Adrenal gland (tissue), 19 donors: ENCODE measurements at regions of chr17 and their contacts with region 1.

Region 1: DNA sequence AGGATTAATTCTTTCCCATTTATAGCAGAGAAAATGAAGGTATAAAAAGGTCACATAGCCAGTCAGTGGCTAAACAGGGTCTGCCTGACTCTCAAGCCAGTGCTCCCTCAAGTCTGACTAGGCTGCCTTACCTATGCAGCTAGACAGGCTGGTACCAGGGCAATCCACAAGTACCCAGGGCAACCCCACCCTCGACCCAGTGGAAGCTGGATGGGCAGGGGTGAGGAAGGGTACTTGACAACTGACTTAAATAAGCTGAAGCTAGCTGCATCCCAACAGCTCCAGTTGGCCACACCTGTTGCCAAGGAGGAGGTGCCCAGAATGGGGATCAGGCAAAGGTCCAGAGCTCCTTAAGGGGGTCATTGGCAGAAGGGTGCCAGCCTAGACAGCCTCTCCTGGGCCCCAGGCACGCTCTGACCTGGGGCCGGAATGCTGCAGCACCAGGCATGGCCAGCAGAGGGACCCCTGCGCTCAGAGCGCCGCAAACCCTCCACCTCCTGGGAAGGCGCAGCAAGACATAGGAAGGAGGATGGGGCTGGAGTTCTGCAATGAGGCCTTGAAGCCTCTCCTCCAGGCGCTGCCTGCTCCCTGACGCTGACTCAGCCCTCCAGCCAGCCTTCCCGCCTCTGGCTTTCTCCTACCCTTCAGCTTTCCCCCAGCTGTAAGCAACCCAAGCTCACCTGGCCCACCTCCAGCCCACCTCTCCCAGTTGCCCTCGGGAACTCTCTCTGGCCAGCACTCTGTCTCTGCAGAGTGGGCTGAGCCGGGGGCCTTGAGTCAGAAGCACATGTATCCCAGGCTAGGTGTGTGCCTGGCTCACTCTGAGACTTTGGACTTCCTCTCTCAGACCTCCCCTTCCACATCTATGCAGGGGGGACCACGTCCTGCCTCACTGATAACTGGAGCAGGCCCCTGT is 28.8 kb downstream of the MPP2 start:
- DNase-seq: peak; percentile 75 to 86 (median 85)
- H3K4me3 ChIP-seq: no peak overlapping the region
- H3K27ac ChIP-seq: no peak overlapping the region
- H3K4me1 ChIP-seq: peaks cover 3 to 6% of the 10 kb centered on the region in 2 donors
- H3K27me3 ChIP-seq: no peaks in the 10 kb centered on the region
- CTCF ChIP-seq: peak; percentile 86 to 96 (median 92)
- POLR2A ChIP-seq: no peak

Region 2: DNA sequence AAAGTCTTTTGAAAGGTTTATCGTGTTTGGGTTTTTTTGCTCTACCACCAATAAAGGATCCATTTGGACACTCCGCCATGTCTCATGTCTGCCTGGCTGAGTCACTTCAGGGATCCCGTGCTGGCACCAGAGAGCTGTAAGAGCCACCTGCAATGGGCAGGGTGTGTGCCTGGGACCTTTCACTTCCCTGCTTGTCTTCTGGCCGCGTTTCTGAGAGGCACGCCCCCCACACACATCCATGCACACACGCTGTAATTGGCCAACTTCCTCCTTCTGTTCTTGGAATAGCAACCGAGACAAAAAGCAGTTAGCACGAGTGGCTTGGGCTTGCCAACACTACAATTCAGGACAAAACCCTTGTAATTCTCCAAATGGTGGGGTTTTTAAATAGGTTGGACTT is 110.1 kb before region 1 on chr17:
- intact Hi-C with region 1: no loop called
- DNase-seq: peak in 4 of 7 donors; percentile 40 to 63 (median 54)
- H3K4me3 ChIP-seq: no peak overlapping the region
- H3K27ac ChIP-seq: peak overlapping the region in 1 of 5 donors; percentile 36
- H3K4me1 ChIP-seq: peaks cover 0 to 18% of the 10 kb centered on the region in 2 donors
- H3K27me3 ChIP-seq: no peaks in the 10 kb centered on the region
- CTCF ChIP-seq: no peak
- POLR2A ChIP-seq: no peak

Region 3: GRCh38 chr17:43940630-43941029 is 62.1 kb after region 1 on chr17:
- intact Hi-C with region 1: no loop called
- DNase-seq: no peak
- H3K4me3 ChIP-seq: no peak overlapping the region
- H3K27ac ChIP-seq: no peak overlapping the region
- H3K4me1 ChIP-seq: no peaks in the 10 kb centered on the region
- H3K27me3 ChIP-seq: peaks cover 7% of the 10 kb centered on the region
- CTCF ChIP-seq: peak in 4 of 6 experiments; percentile 7 to 25 (median 15)
- POLR2A ChIP-seq: no peak

Region 4: DNA sequence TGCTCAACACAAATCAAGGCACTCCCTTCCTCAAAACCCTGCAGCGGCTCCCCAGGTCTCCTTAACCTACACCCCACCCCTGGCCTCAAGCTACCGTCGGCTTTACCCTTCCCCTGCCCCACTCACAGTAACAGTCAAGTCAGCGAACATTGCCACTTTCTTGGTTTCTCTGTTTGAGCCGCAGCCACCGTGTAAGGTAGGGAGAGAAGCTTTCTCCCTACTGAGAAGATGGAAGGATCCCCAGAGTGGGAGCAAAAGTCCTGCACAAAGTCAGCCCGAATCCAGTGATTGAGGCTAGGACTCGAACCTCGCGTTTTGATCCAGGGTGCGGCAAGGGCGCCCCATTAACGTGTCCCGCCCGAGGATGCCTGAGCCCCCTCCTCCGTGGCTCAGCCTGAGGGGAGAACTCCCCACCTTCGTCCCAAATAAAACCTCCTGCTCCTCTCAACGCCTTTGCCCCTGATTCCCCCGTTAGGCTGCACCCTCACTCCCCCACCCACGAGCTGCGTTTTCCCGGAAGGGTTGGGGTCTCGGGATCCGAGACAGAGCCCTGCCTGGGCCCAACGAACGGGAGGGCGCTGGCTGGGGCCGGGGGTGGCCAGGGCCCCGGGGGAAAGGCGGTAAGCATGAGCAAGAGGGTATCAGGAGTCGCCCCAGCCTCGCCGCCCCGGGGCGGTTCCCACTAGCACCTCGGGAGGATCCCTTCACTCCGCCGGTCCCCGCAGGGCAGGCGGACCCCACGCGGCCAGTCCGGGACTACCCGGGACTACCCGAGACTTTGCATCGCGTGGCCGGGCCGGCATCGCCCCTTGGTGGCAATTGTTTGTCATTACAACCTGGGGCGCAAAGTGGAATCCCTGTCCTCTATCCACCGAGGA is 116.0 kb after region 1 on chr17:
- intact Hi-C with region 1: loop called in 1 of 2 experiments (anchors 10 kb)
- DNase-seq: peak; percentile 53 to 79 (median 72)
- H3K4me3 ChIP-seq: peak overlapping the region in 1 of 4 donors; percentile 44
- H3K27ac ChIP-seq: no peak overlapping the region
- H3K4me1 ChIP-seq: peaks cover 0 to 6% of the 10 kb centered on the region in 2 donors
- H3K27me3 ChIP-seq: no peaks in the 10 kb centered on the region
- CTCF ChIP-seq: peak; percentile 79 to 94 (median 90)
- POLR2A ChIP-seq: no peak